ENCODE measurements at regions of chr12 and their contacts with region 1.

Region 1: DNA sequence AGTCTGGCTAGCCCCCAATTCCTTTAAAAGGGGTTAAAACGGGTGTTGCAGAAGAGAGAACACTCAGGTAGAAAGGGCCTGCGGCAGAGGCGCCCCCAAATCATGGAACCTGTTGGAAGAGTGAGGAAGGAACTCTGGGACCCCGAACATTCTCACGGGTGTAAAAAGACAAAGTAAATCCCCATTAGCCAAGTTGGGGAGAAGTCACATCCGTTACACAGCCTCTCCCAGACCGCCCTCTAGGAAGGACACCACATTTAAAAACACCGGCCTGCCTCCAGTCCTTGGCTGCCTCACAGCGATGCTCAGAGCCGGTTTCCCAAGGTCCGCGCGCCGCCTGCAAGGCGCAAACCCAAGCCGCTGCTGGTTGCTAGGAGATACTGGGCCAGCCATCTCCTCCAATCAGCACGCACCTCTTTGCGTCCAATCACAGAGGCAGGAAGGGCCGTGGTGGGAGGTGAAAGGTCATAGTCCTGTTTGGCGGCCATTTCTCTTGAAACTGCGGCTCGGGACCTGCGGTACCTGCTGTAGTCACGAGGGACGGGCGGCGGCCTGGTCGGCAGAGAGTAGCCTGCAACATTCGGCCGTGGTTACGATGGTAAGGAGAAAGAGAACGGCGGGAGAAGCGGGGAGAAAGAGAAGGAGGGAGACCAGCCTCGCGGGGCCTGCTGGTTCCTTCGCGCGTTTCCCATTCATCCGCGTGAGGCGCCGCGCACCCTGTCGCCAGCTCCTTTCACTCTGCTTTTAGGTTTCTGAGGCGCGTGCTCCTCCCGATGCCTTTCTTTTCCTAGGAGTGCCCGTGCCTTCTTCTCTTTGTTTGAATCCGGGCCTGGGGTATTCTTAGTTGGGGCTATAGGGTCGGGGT is at the start of gene SNRPF:
- DNase-seq: peak; percentile 84 to 97 (median 91)
- ATAC-seq: peak; percentile 93
- H3K4me3 ChIP-seq: peak within 1 kb of the TSS; percentile 83
- H3K4me3 Mint-ChIP-seq: no peak within 1 kb of the TSS
- H3K27ac ChIP-seq: peak within 1 kb of the TSS; percentile 49 to 89
- H3K27ac Mint-ChIP-seq: no peak within 1 kb of the TSS
- H3K4me1 ChIP-seq: peaks cover 26% of the 10 kb centered on the region
- H3K4me1 Mint-ChIP-seq: peaks cover 12% of the 10 kb centered on the region
- H3K27me3 ChIP-seq: no peaks in the 10 kb centered on the region
- H3K27me3 Mint-ChIP-seq: peaks cover 4% of the 10 kb centered on the region
- CTCF ChIP-seq: no peak
- total RNA-seq, gene SNRPF: 40.9 to 44.0 TPM

Region 2: DNA sequence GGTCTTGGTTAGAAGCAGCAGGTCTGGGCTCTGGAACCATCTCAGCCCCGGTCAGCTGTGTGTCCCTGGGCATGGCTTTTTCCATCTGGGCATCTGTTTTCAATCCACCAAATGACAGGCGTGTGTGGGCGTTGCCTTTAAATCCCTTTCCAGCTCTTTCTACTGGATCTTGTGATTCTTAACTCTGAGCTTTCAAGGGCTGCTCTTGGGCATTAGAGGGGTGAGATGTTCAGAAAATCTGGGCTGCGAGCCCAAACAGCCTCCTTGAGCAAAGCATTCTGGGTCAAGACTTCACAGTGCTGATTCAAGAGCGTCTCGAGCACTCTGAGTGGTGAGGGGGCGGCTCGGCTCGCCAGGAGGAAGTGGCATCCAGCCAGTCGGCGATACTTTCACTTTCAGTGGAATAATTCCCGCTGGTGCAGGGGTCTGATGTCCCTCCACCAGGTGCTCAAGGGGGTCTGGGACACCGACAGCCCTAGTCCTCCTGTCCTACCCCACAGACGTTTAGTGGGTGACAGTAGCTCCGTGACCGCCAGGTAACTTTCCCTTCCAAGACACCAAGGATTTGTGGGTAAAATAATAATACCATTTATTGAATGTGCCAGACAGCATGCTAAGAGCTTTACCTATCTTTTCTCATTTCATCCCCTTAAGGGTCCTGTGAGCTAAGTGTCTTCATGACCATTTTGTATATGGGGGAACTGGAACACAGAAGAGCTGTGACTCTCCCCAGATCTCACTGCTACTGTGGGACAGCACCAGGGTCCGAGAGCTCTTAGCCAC is 1596.3 kb before region 1 on chr12:
- CTCF ChIA-PET with region 1: no interaction called
- POLR2A ChIA-PET with region 1: no interaction called
- intact Hi-C with region 1: loop called in 1 of 2 experiments (anchors 10 kb)
- DNase-seq: peak; percentile 50 to 86 (median 66)
- ATAC-seq: peak; percentile 90
- H3K4me3 ChIP-seq: peak overlapping the region; percentile 82
- H3K4me3 Mint-ChIP-seq: peak overlapping the region; percentile 98
- H3K27ac ChIP-seq: peak overlapping the region; percentile 89 to 92
- H3K27ac Mint-ChIP-seq: peak overlapping the region; percentile 99
- H3K4me1 ChIP-seq: peaks cover 31% of the 10 kb centered on the region
- H3K4me1 Mint-ChIP-seq: peaks cover 46% of the 10 kb centered on the region
- H3K27me3 ChIP-seq: no peaks in the 10 kb centered on the region
- H3K27me3 Mint-ChIP-seq: no peaks in the 10 kb centered on the region
- CTCF ChIP-seq: no peak

Region 3: DNA sequence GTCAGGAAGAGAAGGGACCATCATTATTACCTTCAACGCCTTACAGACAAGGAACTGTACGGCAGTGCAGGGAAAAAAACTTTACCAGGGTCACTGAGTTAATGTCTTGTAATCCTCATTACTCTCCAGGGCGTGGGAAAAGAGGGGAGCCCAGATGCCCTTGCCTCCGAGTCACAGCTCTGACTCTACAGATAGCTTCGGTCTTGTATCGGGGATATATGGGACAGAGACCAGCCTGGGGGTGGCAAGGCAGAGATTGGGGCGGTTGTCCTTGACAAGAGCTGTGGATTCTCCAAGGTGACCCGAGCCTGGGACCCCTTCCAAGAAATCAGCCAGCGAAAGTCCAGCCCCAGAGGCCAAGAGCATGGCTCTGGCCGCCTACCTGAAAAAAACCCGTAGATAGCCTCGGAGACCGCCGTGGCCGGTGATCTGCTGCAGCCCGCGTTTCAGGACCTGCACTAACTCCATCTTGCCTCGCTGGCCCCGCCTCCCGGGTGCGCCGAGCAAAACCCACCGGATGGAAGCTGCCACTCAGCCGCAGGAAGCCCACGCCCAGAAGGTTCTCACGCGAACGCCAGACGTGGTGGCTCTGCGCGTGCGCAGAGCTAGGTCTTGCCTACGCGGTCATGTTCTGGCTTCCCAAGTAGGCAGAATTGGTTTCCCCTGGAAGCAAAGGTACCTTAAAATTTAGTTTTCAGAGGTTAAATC is 855.3 kb before region 1 on chr12 and contains the start of gene NDUFA12:
- CTCF ChIA-PET with region 1: no interaction called
- POLR2A ChIA-PET with region 1: no interaction called
- intact Hi-C with region 1: loop called in 1 of 2 experiments (anchors 5 kb)
- DNase-seq: peak; percentile 90 to 99 (median 93)
- ATAC-seq: peak; percentile 100
- H3K4me3 ChIP-seq: peak within 1 kb of the TSS; percentile 80
- H3K4me3 Mint-ChIP-seq: peak within 1 kb of the TSS; percentile 96
- H3K27ac ChIP-seq: peak within 1 kb of the TSS; percentile 66 to 76
- H3K27ac Mint-ChIP-seq: peak within 1 kb of the TSS; percentile 87
- H3K4me1 ChIP-seq: peaks cover 29% of the 10 kb centered on the region
- H3K4me1 Mint-ChIP-seq: peaks cover 55% of the 10 kb centered on the region
- H3K27me3 ChIP-seq: no peaks in the 10 kb centered on the region
- H3K27me3 Mint-ChIP-seq: no peaks in the 10 kb centered on the region
- CTCF ChIP-seq: no peak
- total RNA-seq, gene NDUFA12: 43.3 to 43.7 TPM

Region 4: DNA sequence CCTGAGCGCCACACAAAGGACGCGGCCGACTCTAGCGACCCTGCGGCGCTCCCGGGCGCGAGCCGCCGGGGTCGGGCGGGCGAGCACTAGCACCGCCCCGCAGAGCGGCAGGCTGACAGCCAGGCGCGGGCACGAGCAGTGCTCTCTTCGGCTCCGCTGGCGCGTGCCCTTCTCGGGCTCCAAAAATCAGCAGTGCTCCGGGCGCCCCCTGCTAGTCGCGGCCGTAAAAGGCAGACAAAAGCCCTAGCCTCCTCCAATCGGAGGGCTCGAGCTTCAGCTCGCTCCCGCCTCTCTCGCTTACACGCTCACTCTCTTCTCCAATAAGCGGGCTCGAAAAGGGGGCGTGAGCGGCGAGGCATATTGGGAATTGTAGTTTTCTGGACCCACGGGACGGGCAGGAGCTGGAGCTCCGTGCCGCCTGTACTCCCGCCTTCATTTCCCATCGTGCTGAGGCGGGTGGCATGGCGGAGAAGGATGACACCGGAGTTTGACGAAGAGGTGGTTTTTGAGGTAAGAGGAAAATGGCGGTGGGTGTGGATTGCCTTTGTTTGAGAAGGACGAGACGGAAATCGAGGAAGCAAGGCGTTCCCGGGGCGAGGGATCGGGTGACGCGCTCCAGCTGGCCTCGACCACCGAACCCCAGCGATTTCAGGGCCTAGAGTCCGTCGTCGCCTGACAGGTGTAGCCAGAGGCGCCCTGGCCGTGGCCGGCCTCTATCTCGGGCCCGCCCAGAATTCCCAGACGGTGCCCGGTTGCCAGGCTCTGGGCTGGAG is 641.1 kb before region 1 on chr12 and contains the starts of genes FGD6 and VEZT:
- CTCF ChIA-PET with region 1: no interaction called
- POLR2A ChIA-PET with region 1: no interaction called
- intact Hi-C with region 1: loop called in 1 of 2 experiments (anchors 5 kb)
- DNase-seq: peak; percentile 94 to 99 (median 98)
- ATAC-seq: peak; percentile 90
- H3K4me3 ChIP-seq: peak within 1 kb of the TSS; percentile 86
- H3K4me3 Mint-ChIP-seq: peak within 1 kb of the TSS; percentile 94
- H3K27ac ChIP-seq: peak within 1 kb of the TSS; percentile 95 to 96
- H3K27ac Mint-ChIP-seq: peak within 1 kb of the TSS; percentile 88
- H3K4me1 ChIP-seq: peaks cover 12% of the 10 kb centered on the region
- H3K4me1 Mint-ChIP-seq: peaks cover 47% of the 10 kb centered on the region
- H3K27me3 ChIP-seq: no peaks in the 10 kb centered on the region
- H3K27me3 Mint-ChIP-seq: peaks cover 4% of the 10 kb centered on the region
- CTCF ChIP-seq: peak; percentile 65
- total RNA-seq, gene FGD6: 1.5 TPM
- total RNA-seq, gene VEZT: 52.6 to 57.2 TPM

Region 5: DNA sequence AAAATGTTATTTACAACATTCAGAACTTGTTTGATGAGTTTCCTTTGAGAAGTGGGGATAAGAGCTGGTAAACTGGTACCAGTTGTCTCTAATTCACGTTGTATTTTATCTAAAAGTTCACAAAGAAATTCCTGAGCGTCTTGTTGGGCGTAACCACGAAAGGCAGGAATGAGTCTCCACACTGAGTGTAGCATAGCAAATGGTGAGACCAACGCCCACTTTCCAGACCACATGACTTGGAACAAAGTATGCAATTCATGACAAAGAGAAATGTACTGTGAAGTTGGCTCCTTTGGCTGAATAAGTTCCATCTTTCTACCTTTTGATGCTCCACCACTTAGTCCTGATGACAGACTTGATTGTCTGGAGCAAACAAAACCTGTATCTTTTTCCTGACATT is 325.9 kb before region 1 on chr12:
- CTCF ChIA-PET with region 1: no interaction called
- POLR2A ChIA-PET with region 1: no interaction called
- intact Hi-C with region 1: no loop called
- DNase-seq: no peak
- ATAC-seq: no peak
- H3K4me3 ChIP-seq: no peak overlapping the region
- H3K4me3 Mint-ChIP-seq: no peak overlapping the region
- H3K27ac ChIP-seq: no peak overlapping the region
- H3K27ac Mint-ChIP-seq: no peak overlapping the region
- H3K4me1 ChIP-seq: no peaks in the 10 kb centered on the region
- H3K4me1 Mint-ChIP-seq: peaks cover 5% of the 10 kb centered on the region
- H3K27me3 ChIP-seq: no peaks in the 10 kb centered on the region
- H3K27me3 Mint-ChIP-seq: no peaks in the 10 kb centered on the region
- CTCF ChIP-seq: no peak

Region 6: GRCh38 chr12:95548539-95549391 is 309.9 kb before region 1 on chr12:
- CTCF ChIA-PET with region 1: no interaction called
- POLR2A ChIA-PET with region 1: no interaction called
- intact Hi-C with region 1: loop called in 1 of 2 experiments (anchors 10 kb)
- DNase-seq: peak; percentile 48 to 89 (median 69)
- ATAC-seq: peak; percentile 82
- H3K4me3 ChIP-seq: peak overlapping the region; percentile 73
- H3K4me3 Mint-ChIP-seq: peak overlapping the region; percentile 96
- H3K27ac ChIP-seq: peak overlapping the region; percentile 66 to 72
- H3K27ac Mint-ChIP-seq: peak overlapping the region; percentile 84
- H3K4me1 ChIP-seq: peaks cover 15% of the 10 kb centered on the region
- H3K4me1 Mint-ChIP-seq: peaks cover 52% of the 10 kb centered on the region
- H3K27me3 ChIP-seq: no peaks in the 10 kb centered on the region
- H3K27me3 Mint-ChIP-seq: peaks cover 16% of the 10 kb centered on the region
- CTCF ChIP-seq: no peak

Region 7: GRCh38 chr12:95881331-95881955 is 22.7 kb after region 1 on chr12:
- CTCF ChIA-PET with region 1: no interaction called
- POLR2A ChIA-PET with region 1: no interaction called
- intact Hi-C with region 1: no loop called
- DNase-seq: no peak
- ATAC-seq: no peak
- H3K4me3 ChIP-seq: no peak overlapping the region
- H3K4me3 Mint-ChIP-seq: no peak overlapping the region
- H3K27ac ChIP-seq: no peak overlapping the region
- H3K27ac Mint-ChIP-seq: no peak overlapping the region
- H3K4me1 ChIP-seq: no peaks in the 10 kb centered on the region
- H3K4me1 Mint-ChIP-seq: no peaks in the 10 kb centered on the region
- H3K27me3 ChIP-seq: peaks cover 0 to 3% of the 10 kb centered on the region in 2 experiments
- H3K27me3 Mint-ChIP-seq: no peaks in the 10 kb centered on the region
- CTCF ChIP-seq: no peak

Region 8: GRCh38 chr12:96035278-96036236 is 176.8 kb after region 1 on chr12 and contains the start of gene LTA4H:
- CTCF ChIA-PET with region 1: no interaction called
- POLR2A ChIA-PET with region 1: no interaction called
- intact Hi-C with region 1: loop called (anchors 1 to 2 kb)
- DNase-seq: peak; percentile 92 to 99 (median 96)
- ATAC-seq: peak; percentile 93
- H3K4me3 ChIP-seq: peak within 1 kb of the TSS; percentile 89
- H3K4me3 Mint-ChIP-seq: no peak within 1 kb of the TSS
- H3K27ac ChIP-seq: peak within 1 kb of the TSS; percentile 59 to 60
- H3K27ac Mint-ChIP-seq: no peak within 1 kb of the TSS
- H3K4me1 ChIP-seq: peaks cover 20% of the 10 kb centered on the region
- H3K4me1 Mint-ChIP-seq: peaks cover 11% of the 10 kb centered on the region
- H3K27me3 ChIP-seq: no peaks in the 10 kb centered on the region
- H3K27me3 Mint-ChIP-seq: no peaks in the 10 kb centered on the region
- CTCF ChIP-seq: no peak
- total RNA-seq, gene LTA4H: 43.0 to 44.0 TPM

Region 9: DNA sequence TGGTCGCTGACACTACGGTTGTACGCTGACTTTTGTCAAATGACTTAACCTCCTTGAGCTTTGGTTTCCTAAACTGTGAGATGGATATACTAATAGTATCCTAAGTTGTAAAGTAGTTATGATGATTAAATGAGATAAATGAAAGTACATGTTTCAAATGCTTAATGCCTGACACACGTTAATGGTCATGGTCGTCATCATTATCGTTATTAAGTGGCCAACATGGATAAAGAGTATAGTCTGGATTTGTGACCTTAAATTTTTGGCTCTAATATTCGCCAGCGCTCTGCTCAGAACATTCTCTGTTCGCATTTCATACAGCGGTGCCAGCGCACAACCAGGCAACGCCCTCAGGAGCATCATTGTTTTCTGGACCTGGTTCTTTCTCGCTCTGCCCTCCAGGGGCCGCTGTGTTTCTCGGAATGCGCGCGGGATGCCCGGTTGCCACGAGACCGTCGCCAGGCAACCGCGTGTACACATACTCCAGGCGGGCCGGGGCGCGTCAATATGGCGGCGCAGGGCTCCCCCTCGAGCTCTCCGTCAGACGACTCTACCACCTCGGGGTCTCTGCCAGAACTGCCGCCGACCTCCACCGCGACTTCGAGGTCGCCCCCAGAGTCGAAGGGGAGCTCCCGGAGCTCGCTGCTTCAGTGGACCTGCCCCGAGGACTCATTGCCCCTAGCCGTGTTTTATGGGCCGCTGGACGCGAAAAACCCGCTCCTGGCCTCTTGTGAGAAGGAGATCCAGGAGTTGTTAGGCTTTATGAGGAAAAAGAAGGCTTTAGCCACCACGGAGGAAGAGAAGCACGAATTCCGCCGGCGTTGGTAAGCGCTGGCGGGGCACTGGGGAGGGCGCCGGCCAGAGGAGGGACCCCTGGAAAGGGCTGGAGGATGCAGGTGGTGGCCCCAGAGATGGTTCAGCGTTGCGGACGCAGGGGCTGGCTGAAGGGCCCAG is 630.7 kb after region 1 on chr12 and contains the start of gene CFAP54:
- CTCF ChIA-PET with region 1: no interaction called
- POLR2A ChIA-PET with region 1: no interaction called
- intact Hi-C with region 1: loop called in 1 of 2 experiments (anchors 10 kb)
- DNase-seq: peak; percentile 91 to 98 (median 94)
- ATAC-seq: peak; percentile 85
- H3K4me3 ChIP-seq: peak within 1 kb of the TSS; percentile 68
- H3K4me3 Mint-ChIP-seq: peak within 1 kb of the TSS; percentile 90
- H3K27ac ChIP-seq: no peak within 1 kb of the TSS
- H3K27ac Mint-ChIP-seq: peak within 1 kb of the TSS; percentile 80
- H3K4me1 ChIP-seq: peaks cover 28% of the 10 kb centered on the region
- H3K4me1 Mint-ChIP-seq: peaks cover 16% of the 10 kb centered on the region
- H3K27me3 ChIP-seq: no peaks in the 10 kb centered on the region
- H3K27me3 Mint-ChIP-seq: peaks cover 6% of the 10 kb centered on the region
- CTCF ChIP-seq: peak; percentile 80
- total RNA-seq, gene CFAP54: 0.20 to 0.22 TPM